ENCODE measurements at regions of chr2 and their contacts with region 1.

Region 1: GRCh38 chr2:45494269-45494977 is 116.6 kb downstream of the SRBD1 start:
- DNase-seq: no peak
- H3K4me3 ChIP-seq: no peak overlapping the region
- H3K27ac ChIP-seq: no peak overlapping the region
- H3K4me1 ChIP-seq: no peaks in the 10 kb centered on the region
- H3K27me3 ChIP-seq: no peaks in the 10 kb centered on the region
- CTCF ChIP-seq: peak in 2 of 3 donors; percentile 70 to 73
- POLR2A ChIP-seq: no peak

Region 2: GRCh38 chr2:44981136-44982108 is 513.0 kb before region 1 on chr2:
- intact Hi-C with region 1: loop called (anchors 1 kb)
- DNase-seq: peak; percentile 40 to 80
- H3K4me3 ChIP-seq: no peak overlapping the region
- H3K27ac ChIP-seq: no peak overlapping the region
- H3K4me1 ChIP-seq: no peaks in the 10 kb centered on the region
- H3K27me3 ChIP-seq: no peaks in the 10 kb centered on the region
- CTCF ChIP-seq: peak; percentile 24 to 88 (median 75)
- POLR2A ChIP-seq: no peak

Region 3: GRCh38 chr2:45439788-45440773 is 54.3 kb before region 1 on chr2:
- intact Hi-C with region 1: no loop called
- DNase-seq: no peak
- H3K4me3 ChIP-seq: no peak overlapping the region
- H3K27ac ChIP-seq: no peak overlapping the region
- H3K4me1 ChIP-seq: no peaks in the 10 kb centered on the region
- H3K27me3 ChIP-seq: no peaks in the 10 kb centered on the region
- CTCF ChIP-seq: no peak
- POLR2A ChIP-seq: no peak